CD8-positive, alpha-beta T cell (primary cell): ENCODE measurements at regions of chr22 and their contacts with region 1.

Region 1: DNA sequence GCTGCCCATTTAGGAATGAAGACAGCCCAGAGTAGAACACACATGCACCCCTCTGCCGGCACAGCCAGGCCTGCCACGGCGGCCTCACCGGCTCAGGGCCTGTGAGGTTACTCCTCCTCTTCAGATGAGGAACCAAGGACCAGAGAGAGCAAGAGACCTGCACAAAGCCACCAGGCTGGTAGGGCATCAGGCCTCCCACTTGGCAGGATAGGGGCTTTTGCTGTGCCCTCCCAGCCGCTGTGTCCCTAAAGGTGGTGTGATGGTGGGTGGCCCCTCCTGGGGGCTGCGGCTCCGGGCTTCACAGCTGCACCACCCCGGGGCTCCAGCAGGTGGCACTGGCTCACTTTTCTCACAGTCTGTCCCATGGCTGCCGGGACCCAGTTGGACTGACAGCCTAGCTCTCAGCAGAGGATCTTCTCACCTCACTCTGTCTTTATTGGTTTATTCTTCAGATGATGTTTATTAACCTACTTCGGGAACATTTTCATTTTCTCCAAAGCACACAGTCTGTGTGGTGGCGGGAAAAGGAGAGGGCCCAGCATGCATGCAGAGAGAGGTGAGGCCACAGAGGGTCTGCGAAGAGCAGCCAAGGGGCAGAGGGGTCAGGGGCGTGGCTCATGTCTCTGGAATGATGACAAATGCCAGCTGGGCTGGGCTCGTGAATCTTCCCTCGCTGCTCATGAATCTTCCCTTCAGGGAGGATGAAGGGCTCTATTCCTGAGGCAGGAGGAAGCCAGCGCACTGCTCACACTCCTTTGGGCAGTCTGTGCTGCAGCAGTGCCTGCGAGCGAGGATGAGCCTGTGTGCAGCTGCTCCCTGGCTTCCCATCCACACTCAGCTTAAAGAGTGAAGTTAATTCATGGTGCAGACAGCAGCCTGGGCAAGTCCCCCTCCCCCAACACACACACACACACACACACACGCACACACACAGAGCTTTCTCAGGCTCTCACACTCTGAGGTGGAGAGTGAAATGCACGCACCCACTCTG is 101.1 kb upstream of the PITPNB start:
- DNase-seq: peak; percentile 48 to 77 (median 62)
- ATAC-seq: peak; percentile 88
- H3K4me3 ChIP-seq: no peak overlapping the region
- H3K4me3 Mint-ChIP-seq: no peak overlapping the region
- H3K27ac ChIP-seq: no peak overlapping the region
- H3K27ac Mint-ChIP-seq: no peak overlapping the region
- H3K4me1 ChIP-seq: no peaks in the 10 kb centered on the region
- H3K4me1 Mint-ChIP-seq: no peaks in the 10 kb centered on the region
- H3K27me3 ChIP-seq: no peaks in the 10 kb centered on the region
- H3K27me3 Mint-ChIP-seq: no peaks in the 10 kb centered on the region
- CTCF ChIP-seq: peak; percentile 73

Region 2: DNA sequence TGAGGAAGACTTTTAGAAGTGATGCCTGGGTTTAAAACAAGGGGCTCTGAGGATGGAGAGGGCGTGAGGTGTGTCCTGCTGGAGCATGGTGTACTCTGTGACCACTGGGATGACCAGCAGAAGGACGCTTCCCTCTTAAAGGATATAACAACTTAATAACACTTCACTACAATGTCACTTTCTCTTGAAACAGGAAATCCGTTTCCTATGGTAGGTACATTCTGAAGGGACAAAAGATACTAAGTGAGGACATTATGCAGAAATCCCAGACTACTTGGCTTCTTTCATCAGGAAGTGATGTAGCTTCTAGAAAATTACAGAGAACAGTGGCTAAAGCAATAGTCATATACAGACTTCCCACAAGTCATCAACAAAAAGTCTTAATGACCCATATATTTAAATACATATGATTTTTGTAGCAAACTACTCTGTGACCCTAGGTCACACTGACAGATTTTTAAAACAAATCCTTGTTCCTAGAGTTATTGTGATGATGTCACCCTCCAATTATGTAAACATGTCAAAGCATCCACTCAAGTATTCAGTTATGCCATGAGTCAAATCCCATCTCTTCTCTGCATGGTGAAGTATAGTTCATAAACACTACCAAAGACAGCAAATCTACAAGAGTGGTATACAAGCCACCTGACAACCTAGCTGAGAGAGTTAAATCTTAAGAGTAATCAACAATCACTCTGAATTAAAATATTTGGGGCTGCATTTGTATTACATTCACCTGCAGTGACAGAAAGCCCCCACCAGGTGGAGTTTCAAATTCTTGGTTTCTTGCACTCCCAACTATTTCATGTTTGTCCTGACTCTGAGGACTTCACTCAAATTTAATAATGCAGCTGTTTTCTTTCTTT is 134.0 kb before region 1 on chr22:
- CTCF ChIA-PET with region 1: interaction called, 14 read pairs
- POLR2A ChIA-PET with region 1: no interaction called
- intact Hi-C with region 1: no loop called
- DNase-seq: peak in 8 of 9 experiments; percentile 20 to 61 (median 50)
- ATAC-seq: peak; percentile 71
- H3K4me3 ChIP-seq: no peak overlapping the region
- H3K4me3 Mint-ChIP-seq: no peak overlapping the region
- H3K27ac ChIP-seq: no peak overlapping the region
- H3K27ac Mint-ChIP-seq: peak overlapping the region; percentile 10
- H3K4me1 ChIP-seq: no peaks in the 10 kb centered on the region
- H3K4me1 Mint-ChIP-seq: no peaks in the 10 kb centered on the region
- H3K27me3 ChIP-seq: no peaks in the 10 kb centered on the region
- H3K27me3 Mint-ChIP-seq: no peaks in the 10 kb centered on the region
- CTCF ChIP-seq: peak; percentile 98

Region 3: DNA sequence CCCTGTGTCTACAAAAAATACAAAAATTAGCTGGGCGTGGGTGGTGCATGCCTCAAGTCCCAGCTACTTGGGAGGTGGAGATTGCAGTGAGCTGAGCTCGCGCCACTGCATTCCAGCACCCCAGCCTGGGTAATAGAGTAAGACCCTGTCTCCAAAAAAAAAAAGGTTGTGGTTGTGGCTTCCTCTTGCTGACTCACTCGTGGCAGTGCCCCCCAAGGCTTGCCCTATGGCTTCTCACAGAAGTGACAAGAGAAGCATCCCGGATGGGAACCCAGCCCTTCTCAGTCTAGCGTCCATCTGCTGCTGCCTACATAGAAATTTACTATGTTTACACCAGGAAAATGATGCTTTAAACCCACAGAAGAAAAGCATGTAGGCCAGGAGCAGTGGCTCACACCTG is 32.6 kb before region 1 on chr22:
- CTCF ChIA-PET with region 1: no interaction called
- POLR2A ChIA-PET with region 1: no interaction called
- intact Hi-C with region 1: no loop called
- DNase-seq: peak in 1 of 9 experiments; percentile 48
- ATAC-seq: no peak
- H3K4me3 ChIP-seq: no peak overlapping the region
- H3K4me3 Mint-ChIP-seq: no peak overlapping the region
- H3K27ac ChIP-seq: no peak overlapping the region
- H3K27ac Mint-ChIP-seq: no peak overlapping the region
- H3K4me1 ChIP-seq: peaks cover 3% of the 10 kb centered on the region
- H3K4me1 Mint-ChIP-seq: peaks cover 6% of the 10 kb centered on the region
- H3K27me3 ChIP-seq: no peaks in the 10 kb centered on the region
- H3K27me3 Mint-ChIP-seq: no peaks in the 10 kb centered on the region
- CTCF ChIP-seq: no peak

Region 4: GRCh38 chr22:28075358-28075981 is 55.3 kb after region 1 on chr22:
- CTCF ChIA-PET with region 1: no interaction called
- POLR2A ChIA-PET with region 1: no interaction called
- intact Hi-C with region 1: no loop called
- DNase-seq: no peak
- ATAC-seq: no peak
- H3K4me3 ChIP-seq: no peak overlapping the region
- H3K4me3 Mint-ChIP-seq: no peak overlapping the region
- H3K27ac ChIP-seq: no peak overlapping the region
- H3K27ac Mint-ChIP-seq: no peak overlapping the region
- H3K4me1 ChIP-seq: no peaks in the 10 kb centered on the region
- H3K4me1 Mint-ChIP-seq: no peaks in the 10 kb centered on the region
- H3K27me3 ChIP-seq: no peaks in the 10 kb centered on the region
- H3K27me3 Mint-ChIP-seq: no peaks in the 10 kb centered on the region
- CTCF ChIP-seq: no peak

Region 5: GRCh38 chr22:28442264-28442710 is 422.1 kb after region 1 on chr22:
- CTCF ChIA-PET with region 1: interaction called, 4 read pairs
- POLR2A ChIA-PET with region 1: no interaction called
- intact Hi-C with region 1: loop called in 1 of 2 experiments (anchors 1 kb)
- DNase-seq: peak; percentile 19 to 80 (median 59)
- ATAC-seq: peak; percentile 87
- H3K4me3 ChIP-seq: peak overlapping the region; percentile 63 to 66
- H3K4me3 Mint-ChIP-seq: peak overlapping the region; percentile 87
- H3K27ac ChIP-seq: peak overlapping the region in 1 of 2 experiments; percentile 0
- H3K27ac Mint-ChIP-seq: peak overlapping the region; percentile 72
- H3K4me1 ChIP-seq: peaks cover 13% of the 10 kb centered on the region
- H3K4me1 Mint-ChIP-seq: peaks cover 18% of the 10 kb centered on the region
- H3K27me3 ChIP-seq: no peaks in the 10 kb centered on the region
- H3K27me3 Mint-ChIP-seq: peaks cover 4% of the 10 kb centered on the region
- CTCF ChIP-seq: peak; percentile 56

Region 6: DNA sequence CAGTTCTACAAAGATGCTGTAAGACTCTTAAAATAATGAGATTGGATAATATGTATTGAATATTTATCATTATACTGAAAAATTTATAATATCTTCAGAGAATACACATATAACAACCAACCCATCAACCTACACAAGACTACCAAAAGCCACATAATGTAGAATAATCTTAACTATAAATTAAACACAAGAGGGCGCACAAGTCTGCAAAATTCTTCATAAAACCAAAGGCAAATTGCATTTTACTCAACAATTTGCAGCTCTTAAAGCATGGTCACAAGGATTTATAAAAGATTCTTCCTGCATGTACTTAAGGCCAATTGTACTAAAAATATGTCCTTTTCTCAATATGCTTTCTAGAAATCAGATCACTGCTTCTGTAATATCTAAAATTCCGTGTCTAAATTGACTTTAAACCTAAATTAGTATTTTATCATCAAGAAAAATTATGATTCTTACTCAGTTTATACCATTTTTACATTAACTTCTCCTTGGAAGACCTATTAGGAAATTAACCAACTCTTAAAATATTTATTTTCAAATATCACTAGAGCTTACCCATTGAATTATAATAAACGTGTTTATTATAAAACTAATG is 580.5 kb after region 1 on chr22:
- CTCF ChIA-PET with region 1: interaction called, 17 read pairs
- POLR2A ChIA-PET with region 1: no interaction called
- intact Hi-C with region 1: no loop called
- DNase-seq: peak in 3 of 9 experiments; percentile 14 to 69 (median 58)
- ATAC-seq: peak; percentile 38
- H3K4me3 ChIP-seq: no peak overlapping the region
- H3K4me3 Mint-ChIP-seq: no peak overlapping the region
- H3K27ac ChIP-seq: no peak overlapping the region
- H3K27ac Mint-ChIP-seq: no peak overlapping the region
- H3K4me1 ChIP-seq: no peaks in the 10 kb centered on the region
- H3K4me1 Mint-ChIP-seq: no peaks in the 10 kb centered on the region
- H3K27me3 ChIP-seq: peaks cover 0 to 2% of the 10 kb centered on the region in 2 experiments
- H3K27me3 Mint-ChIP-seq: peaks cover 24% of the 10 kb centered on the region
- CTCF ChIP-seq: peak; percentile 58

Region 7: DNA sequence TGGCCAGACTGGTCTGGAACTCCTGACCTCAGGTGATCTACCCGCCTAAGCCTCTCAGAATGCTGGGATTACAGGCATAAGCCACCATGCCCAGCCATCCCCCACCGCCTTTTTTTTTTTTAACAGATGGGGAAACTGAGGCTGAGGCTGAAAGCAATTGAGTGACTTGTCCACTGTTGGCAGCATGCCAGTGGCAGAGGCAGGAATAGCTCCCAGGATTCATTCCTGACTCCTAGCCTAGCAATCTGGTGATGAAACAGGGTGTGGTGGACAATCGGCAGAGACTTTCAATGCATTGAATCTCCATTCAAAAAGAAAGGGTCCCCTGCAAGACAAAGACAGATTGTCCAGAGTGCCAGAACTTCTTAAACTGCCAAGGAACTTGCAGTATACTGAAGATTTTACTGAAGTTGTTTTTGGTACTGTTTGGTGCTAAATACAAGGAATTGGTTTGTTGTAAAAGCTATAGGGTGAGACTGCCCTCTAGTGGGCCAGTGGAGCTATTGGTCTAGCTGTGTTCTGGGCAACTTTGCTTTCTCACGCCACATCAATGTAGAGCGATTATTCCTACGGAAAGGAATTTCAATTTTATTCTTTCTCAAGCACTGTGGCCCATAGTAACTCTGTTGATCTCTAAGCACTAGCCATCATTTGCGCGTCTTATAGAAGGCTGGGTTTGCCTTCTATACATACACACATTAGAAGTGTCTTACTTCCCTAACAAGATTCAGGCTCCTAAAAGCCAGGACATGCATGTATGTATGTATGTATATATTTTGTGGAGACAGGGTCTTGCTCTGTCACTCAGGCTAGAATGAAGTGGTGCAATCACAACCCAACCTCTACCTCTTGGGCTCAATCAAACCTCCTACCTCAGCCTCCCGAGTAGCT is 1020.5 kb after region 1 on chr22:
- CTCF ChIA-PET with region 1: no interaction called
- POLR2A ChIA-PET with region 1: no interaction called
- intact Hi-C with region 1: loop called in 1 of 2 experiments (anchors 10 kb)
- DNase-seq: peak; percentile 22 to 82 (median 65)
- ATAC-seq: peak; percentile 63
- H3K4me3 ChIP-seq: no peak overlapping the region
- H3K4me3 Mint-ChIP-seq: no peak overlapping the region
- H3K27ac ChIP-seq: no peak overlapping the region
- H3K27ac Mint-ChIP-seq: no peak overlapping the region
- H3K4me1 ChIP-seq: no peaks in the 10 kb centered on the region
- H3K4me1 Mint-ChIP-seq: peaks cover 3% of the 10 kb centered on the region
- H3K27me3 ChIP-seq: peaks cover 0 to 4% of the 10 kb centered on the region in 2 experiments
- H3K27me3 Mint-ChIP-seq: peaks cover 7% of the 10 kb centered on the region
- CTCF ChIP-seq: peak; percentile 97